GM23248 (cell line): ENCODE measurements at regions of chr9 and their contacts with region 1.

Region 1: GRCh38 chr9:129609486-129610192 is 11.3 kb downstream of the C9orf50 start:
- DNase-seq: peak; percentile 65
- H3K4me3 ChIP-seq: peak overlapping the region; percentile 85
- H3K27ac ChIP-seq: peak overlapping the region; percentile 63
- H3K4me1 ChIP-seq: peaks cover 17% of the 10 kb centered on the region
- H3K27me3 ChIP-seq: no peaks in the 10 kb centered on the region

Region 2: GRCh38 chr9:129320575-129321263 is 288.9 kb before region 1 on chr9:
- in situ Hi-C with region 1: loop called (anchors 10 kb)
- DNase-seq: peak; percentile 90
- H3K4me3 ChIP-seq: peak overlapping the region; percentile 65
- H3K27ac ChIP-seq: peak overlapping the region; percentile 47
- H3K4me1 ChIP-seq: peaks cover 29% of the 10 kb centered on the region
- H3K27me3 ChIP-seq: no peaks in the 10 kb centered on the region

Region 3: DNA sequence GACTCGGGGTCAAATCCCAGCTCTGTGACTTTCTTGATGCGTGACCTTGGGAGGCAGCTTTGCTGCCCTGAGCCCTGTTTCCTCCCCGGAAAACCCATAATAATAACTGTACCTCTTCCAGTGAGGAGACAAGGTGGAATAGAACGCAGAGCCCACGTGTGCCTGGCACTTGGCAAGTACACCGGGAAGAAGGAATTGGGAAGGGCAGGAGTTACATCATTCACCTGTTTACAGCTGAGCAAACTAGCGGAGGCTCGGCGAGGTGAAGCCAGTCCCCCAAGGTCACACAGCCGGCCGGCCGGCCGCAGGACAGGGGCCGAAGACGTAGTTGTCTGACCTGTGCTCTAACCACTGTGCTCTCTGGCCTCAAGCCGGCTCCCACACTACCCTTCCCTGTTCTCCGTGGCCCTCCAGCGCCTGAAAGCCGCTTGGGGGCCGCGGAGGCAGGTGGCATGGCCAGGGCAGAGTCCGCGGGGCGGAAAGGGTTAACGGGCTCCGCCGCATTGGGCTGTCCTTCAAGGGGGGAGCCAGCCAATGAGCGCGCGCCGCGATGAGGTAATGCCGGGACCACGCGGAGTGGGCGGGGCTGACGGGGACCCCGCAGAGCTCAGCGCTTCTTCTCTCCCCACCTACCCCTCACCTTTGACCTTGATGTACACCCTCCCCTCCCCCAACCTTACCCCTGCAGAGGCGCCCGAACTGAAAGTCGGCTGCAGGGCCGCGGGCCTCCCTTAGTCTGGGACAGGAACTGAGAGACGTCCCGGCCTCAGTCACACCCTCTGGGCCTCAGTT is 113.9 kb before region 1 on chr9:
- in situ Hi-C with region 1: loop called (anchors 10 kb)
- DNase-seq: peak; percentile 90
- H3K4me3 ChIP-seq: peak overlapping the region; percentile 85
- H3K27ac ChIP-seq: peak overlapping the region; percentile 96
- H3K4me1 ChIP-seq: peaks cover 30% of the 10 kb centered on the region
- H3K27me3 ChIP-seq: no peaks in the 10 kb centered on the region

Region 4: DNA sequence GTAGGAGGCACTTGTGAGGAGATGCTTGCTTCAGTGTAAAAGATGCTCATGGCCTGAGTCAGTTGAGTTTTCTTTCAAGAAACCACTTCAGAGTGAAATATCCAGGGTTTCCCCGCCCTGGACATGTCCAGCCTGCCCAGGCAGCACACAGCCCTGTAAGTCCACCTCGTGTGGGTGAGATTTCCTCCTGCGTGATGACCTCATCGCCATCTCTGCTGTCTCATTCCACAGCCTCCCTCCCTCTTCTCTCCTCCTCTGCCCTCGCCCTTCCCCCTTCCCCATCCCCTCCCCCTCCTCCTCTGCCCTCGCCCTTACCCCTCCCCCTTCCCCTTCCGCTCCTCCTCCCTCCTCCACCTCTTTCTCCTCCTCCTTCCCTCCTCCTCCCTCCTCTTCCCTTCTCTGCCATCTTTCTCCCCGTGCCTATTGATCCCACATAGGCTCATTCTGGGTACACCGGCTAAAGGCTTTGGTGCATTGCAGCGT is 528.6 kb after region 1 on chr9:
- in situ Hi-C with region 1: no loop called
- DNase-seq: peak; percentile 97
- H3K4me3 ChIP-seq: peak overlapping the region; percentile 26; the same call in 1 of the 2 replicates
- H3K27ac ChIP-seq: peak overlapping the region; percentile 82
- H3K4me1 ChIP-seq: peaks cover 24% of the 10 kb centered on the region
- H3K27me3 ChIP-seq: no peaks in the 10 kb centered on the region